Left cardiac atrium (tissue), 4 donors: ENCODE measurements at regions of chr5 and their contacts with region 1.

Region 1: DNA sequence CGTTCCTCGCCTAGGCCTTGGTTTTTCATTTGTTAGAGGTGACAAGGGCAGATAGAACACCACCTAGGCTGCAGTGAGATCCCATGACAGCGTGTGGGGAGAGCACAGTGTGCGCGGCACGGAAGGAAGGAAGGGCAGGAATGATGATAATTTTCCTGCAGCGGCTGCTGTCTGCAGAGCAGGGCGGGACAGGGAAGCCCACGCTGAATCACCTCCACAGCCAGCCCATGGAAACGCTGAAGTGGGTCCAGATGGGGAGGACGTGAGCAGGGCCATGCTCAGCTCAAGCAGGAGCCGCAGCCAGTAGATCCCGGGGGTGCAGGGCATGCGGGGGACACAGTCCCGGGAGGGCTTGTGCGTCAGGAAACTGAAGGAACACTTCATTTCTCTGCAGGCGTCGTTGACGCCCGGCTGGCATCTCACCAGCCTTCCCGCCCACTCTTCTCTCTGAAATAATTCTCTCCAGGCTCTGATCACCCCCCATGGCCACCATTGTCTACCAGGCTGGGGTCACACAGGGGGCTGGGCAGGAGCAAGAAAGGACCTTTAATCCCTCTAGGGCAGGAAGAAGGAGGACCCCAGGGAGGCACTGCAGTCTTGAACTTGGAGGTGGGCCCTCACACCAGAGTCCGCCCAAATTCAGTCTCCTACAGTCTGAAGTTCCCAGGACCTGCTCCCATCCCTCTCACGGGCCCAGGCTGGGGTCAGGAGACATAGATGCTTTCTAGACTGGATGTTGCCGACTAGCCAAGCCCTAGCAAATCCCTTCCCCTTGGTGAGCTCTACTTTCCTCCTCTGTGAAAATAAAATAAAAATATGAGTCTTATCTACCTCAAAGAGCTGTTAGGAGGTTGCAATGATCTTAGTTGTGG is 20.9 kb upstream of the SYNPO start:
- DNase-seq: peak; percentile 90
- ATAC-seq: peak; percentile 55 to 69

Region 2: DNA sequence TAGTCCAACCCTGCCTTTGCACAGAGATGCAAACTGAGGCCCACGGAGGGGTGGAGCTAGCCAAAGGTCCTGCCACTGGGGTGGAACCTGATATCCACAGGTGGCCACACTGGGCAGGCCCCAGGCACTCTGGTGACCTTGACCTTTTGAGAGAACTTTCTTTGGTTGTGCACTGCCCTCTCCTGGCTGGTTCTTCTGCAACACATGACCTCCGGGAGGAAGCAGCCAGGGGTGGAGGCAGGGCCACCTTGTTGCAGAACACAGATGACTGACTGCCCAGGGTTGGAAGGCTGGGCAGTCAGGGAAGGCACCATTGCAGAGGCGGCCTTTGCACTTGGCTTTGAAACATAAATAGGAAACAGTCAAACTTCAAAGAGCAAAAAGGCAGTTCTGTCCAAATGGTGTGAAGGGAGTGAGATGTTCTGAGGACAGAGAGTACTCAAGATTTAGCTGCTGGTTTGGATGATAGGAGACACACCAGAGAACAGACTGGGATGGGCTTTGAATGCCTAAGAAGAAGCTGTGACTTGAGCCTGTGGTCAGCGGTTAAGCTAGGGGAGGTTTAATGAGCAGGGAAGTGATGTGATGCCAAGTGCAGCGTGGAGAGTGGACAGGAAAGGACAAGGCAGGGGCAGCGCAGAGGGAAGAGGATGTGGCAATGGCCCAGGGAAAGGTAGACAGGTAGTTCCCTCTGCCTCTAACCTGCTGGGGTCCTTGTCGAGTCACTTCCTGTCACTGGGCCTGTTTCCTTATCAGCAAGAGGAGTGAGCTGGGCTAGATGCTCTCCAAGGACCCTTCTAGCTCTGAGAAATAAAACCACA is 268.9 kb before region 1 on chr5:
- intact Hi-C with region 1: no loop called
- DNase-seq: peak; percentile 68
- ATAC-seq: peak; percentile 87

Region 3: DNA sequence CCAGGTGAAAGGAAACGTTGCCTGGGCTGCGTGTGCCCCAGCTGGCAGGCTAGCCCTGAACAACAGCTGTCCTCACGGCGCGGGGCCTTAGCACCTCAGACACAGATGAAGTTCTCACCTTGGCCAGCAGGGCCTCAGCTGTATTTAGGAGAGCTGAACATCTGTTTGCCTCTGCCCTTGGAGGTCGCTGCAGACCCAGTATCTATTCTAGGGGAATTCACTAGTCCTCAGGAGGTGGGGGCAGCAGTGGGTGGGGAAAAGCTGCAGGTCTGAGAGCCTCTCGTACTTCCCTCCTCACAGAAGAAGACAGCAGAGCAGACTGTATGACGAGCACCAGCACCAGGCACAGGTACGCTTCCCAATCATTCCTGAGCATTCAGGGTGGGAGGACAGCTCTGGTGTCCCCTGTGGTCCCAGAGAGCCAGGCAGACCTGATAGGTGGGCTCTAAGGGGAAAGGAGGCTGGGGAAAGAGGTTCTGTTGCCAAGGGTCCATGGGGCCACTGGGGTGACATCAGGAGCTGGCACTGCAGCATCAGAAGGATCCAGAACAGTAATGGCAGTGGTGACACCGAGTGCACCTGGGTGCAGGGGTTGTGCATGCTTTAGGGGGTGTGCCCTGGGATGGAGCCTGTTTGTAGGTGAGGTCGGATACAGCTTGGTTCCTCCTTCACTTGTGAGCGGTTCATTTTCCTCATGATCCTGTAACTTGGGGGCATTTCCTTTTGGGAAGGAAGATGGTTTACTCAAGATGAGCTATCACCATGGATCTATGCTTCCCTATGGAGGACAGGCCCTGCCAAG is 220.7 kb before region 1 on chr5:
- intact Hi-C with region 1: no loop called
- DNase-seq: no peak
- ATAC-seq: no peak

Region 4: GRCh38 chr5:150640311-150641005 is 20.9 kb after region 1 on chr5 and contains the start of gene SYNPO:
- intact Hi-C with region 1: loop called in 1 of 2 experiments (anchors 2 kb)
- DNase-seq: peak; percentile 86
- ATAC-seq: peak; percentile 62 to 74
- total RNA-seq, gene SYNPO: 503 to 769 TPM